ENCODE measurements at regions of chr7 and their contacts with region 1.

Region 1: GRCh38 chr7:26200444-26201246 is at the start of gene HNRNPA2B1:
- DNase-seq: peak; percentile 97
- H3K4me3 Mint-ChIP-seq: peak within 1 kb of the TSS; percentile 100
- H3K27ac Mint-ChIP-seq: peak within 1 kb of the TSS; percentile 100
- H3K4me1 Mint-ChIP-seq: peaks cover 45% of the 10 kb centered on the region
- H3K27me3 Mint-ChIP-seq: no peaks in the 10 kb centered on the region
- total RNA-seq, gene HNRNPA2B1: 835 and 845 TPM in 2 replicates

Region 2: GRCh38 chr7:25862260-25863037 is 338.2 kb before region 1 on chr7:
- intact Hi-C with region 1: loop called (anchors 1 kb)
- DNase-seq: peak; percentile 99
- H3K4me3 Mint-ChIP-seq: peak overlapping the region; percentile 63
- H3K27ac Mint-ChIP-seq: peak overlapping the region; percentile 89
- H3K4me1 Mint-ChIP-seq: peaks cover 46% of the 10 kb centered on the region
- H3K27me3 Mint-ChIP-seq: peaks cover 52% of the 10 kb centered on the region

Region 3: GRCh38 chr7:26090927-26091519 is 109.6 kb before region 1 on chr7:
- intact Hi-C with region 1: loop called (anchors 2 kb)
- DNase-seq: no peak
- H3K4me3 Mint-ChIP-seq: peak overlapping the region; percentile 3
- H3K27ac Mint-ChIP-seq: no peak overlapping the region
- H3K4me1 Mint-ChIP-seq: peaks cover 19% of the 10 kb centered on the region
- H3K27me3 Mint-ChIP-seq: peaks cover 2% of the 10 kb centered on the region

Region 4: GRCh38 chr7:26278770-26279169 is 78.1 kb after region 1 on chr7:
- intact Hi-C with region 1: loop called (anchors 5 kb)
- DNase-seq: no peak
- H3K4me3 Mint-ChIP-seq: no peak overlapping the region
- H3K27ac Mint-ChIP-seq: no peak overlapping the region
- H3K4me1 Mint-ChIP-seq: peaks cover 16% of the 10 kb centered on the region
- H3K27me3 Mint-ChIP-seq: no peaks in the 10 kb centered on the region

Region 5: GRCh38 chr7:26667500-26668133 is 467.0 kb after region 1 on chr7:
- intact Hi-C with region 1: loop called (anchors 10 kb)
- DNase-seq: peak; percentile 52
- H3K4me3 Mint-ChIP-seq: no peak overlapping the region
- H3K27ac Mint-ChIP-seq: no peak overlapping the region
- H3K4me1 Mint-ChIP-seq: peaks cover 13% of the 10 kb centered on the region
- H3K27me3 Mint-ChIP-seq: peaks cover 41% of the 10 kb centered on the region